Common myeloid progenitor, CD34-positive (primary cell): ENCODE measurements at regions of chrX and their contacts with region 1.

Region 1: DNA sequence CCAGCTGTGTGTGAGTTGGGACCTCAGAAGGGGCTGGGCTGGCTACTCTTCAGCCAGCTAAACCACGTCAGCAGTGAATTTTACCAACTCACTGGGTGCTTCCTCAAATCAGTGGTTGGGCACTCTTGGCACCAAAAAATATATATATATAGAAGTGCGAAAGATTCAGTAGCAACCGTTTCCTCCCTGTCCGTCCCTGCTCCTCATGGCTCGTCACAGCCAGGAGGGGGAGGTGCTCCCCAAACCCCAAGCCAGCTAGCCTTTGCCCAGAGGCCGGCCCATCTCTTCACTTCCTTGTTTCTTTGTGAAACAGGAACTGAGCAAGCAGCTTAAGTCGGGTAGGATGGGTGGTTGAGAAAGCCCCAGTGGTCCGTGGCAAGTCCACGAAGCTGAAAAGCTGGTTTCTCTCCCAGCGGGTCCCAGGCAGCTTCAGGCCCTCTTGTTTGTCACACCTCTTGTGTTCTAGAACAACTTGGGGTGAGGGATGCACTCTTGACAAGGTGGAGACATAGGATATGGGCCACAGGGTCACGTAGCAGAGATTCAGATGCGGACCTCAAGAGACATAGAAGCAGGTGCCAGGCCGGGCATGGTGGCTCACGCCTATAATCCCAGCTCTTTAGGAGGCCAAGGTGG is 6.8 kb upstream of the SASH3 start:
- DNase-seq: peak; percentile 84 to 96 (median 94)
- H3K4me3 ChIP-seq: no peak overlapping the region
- H3K27ac ChIP-seq: peak overlapping the region in 1 of 2 experiments; percentile 52
- H3K4me1 ChIP-seq: peaks cover 20 to 87% (median 81%) of the 10 kb centered on the region in 4 experiments
- H3K27me3 ChIP-seq: no peaks in the 10 kb centered on the region

Region 2: GRCh38 chrX:129737916-129738315 is 35.0 kb before region 1 on chrX:
- CTCF ChIA-PET with region 1: no interaction called
- POLR2A ChIA-PET with region 1: no interaction called
- DNase-seq: peak in 2 of 3 donors; percentile 46 to 52
- H3K4me3 ChIP-seq: no peak overlapping the region
- H3K27ac ChIP-seq: no peak overlapping the region
- H3K4me1 ChIP-seq: peaks cover 2 to 38% (median 6%) of the 10 kb centered on the region in 4 experiments
- H3K27me3 ChIP-seq: no peaks in the 10 kb centered on the region

Region 3: DNA sequence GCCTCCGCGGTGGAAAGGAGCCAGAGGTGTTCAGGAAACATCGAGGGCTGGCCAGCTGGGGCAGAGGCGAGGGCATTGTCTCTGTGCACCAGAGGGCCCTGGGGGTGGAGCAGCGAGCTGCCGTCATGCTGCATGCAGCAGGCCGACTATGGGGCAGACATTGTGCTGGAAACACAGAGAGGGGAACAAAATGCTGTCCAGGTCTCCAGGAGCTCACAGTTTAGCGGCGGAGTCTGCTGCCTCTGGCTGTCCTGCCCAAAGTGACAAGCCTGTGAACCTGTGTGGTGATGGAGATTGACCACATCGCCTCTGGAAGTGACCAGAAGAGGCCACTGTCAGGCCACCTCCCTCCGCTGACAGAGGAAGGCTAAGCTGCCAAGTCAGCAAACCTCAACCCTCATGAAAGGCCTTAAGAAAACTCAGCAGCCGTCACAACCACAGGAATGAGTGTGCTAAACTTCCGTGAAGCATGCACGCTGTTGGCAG is 13.3 kb before region 1 on chrX:
- CTCF ChIA-PET with region 1: interaction called, 21 read pairs
- POLR2A ChIA-PET with region 1: interaction called, 4 read pairs
- DNase-seq: peak; percentile 68 to 88 (median 83)
- H3K4me3 ChIP-seq: no peak overlapping the region
- H3K27ac ChIP-seq: peak overlapping the region in 1 of 2 experiments; percentile 15
- H3K4me1 ChIP-seq: peaks cover 4 to 52% (median 33%) of the 10 kb centered on the region in 4 experiments
- H3K27me3 ChIP-seq: no peaks in the 10 kb centered on the region